Left lung (tissue), 14 donors: ENCODE measurements at regions of chr3 and their contacts with region 1.

Region 1: GRCh38 chr3:112734718-112735350 is 93.9 kb upstream of the CCDC80 start:
- DNase-seq: peak in 3 of 4 donors; percentile 26 to 53 (median 39)
- ATAC-seq: peak; percentile 90
- H3K4me3 ChIP-seq: no peak overlapping the region
- H3K27ac ChIP-seq: no peak overlapping the region
- H3K4me1 ChIP-seq: peaks cover 0 to 9% of the 10 kb centered on the region in 2 donors
- H3K27me3 ChIP-seq: no peaks in the 10 kb centered on the region
- CTCF ChIP-seq: peak; percentile 56 to 70

Region 2: GRCh38 chr3:112822069-112823055 is 87.5 kb after region 1 on chr3:
- intact Hi-C with region 1: loop called in 1 of 2 experiments (anchors 10 kb)
- DNase-seq: no peak
- ATAC-seq: no peak
- H3K4me3 ChIP-seq: no peak overlapping the region
- H3K27ac ChIP-seq: no peak overlapping the region
- H3K4me1 ChIP-seq: no peaks in the 10 kb centered on the region
- H3K27me3 ChIP-seq: no peaks in the 10 kb centered on the region
- CTCF ChIP-seq: no peak

Region 3: DNA sequence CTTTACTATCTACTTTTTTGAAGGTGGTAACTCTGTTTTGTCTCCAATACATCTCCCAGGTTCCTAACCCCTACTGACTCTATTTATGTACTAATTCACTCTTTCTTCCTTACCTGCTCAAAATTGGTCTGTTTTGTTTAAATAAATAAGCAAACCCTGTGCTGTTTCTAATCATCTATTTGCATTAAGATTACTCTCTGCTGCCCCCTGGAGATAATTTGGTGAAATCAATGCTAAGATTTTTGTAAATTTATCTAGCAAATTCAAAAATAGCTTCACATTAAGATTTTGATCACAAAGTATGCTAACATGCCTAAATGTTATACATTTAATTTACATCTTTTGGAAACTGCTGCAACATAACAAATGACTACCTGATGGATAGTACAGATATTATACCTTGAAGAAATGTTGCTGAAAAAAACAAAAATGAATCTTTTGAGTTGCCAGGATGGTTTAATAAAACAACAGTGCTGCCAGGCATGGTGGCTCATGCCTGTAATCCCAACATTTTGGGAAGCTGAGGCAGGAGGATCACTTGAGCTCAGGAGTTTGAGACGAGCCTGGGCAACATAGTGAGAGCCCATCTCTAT is 244.5 kb after region 1 on chr3:
- intact Hi-C with region 1: loop called in 1 of 2 experiments (anchors 5 kb)
- DNase-seq: peak in 1 of 4 donors; percentile 40
- ATAC-seq: peak; percentile 51
- H3K4me3 ChIP-seq: no peak overlapping the region
- H3K27ac ChIP-seq: no peak overlapping the region
- H3K4me1 ChIP-seq: peaks cover 0 to 28% of the 10 kb centered on the region in 2 donors
- H3K27me3 ChIP-seq: no peaks in the 10 kb centered on the region
- CTCF ChIP-seq: peak; percentile 60 to 68